Mammary epithelial cell (primary cell): ENCODE measurements at regions of chrX and their contacts with region 1.

Region 1: DNA sequence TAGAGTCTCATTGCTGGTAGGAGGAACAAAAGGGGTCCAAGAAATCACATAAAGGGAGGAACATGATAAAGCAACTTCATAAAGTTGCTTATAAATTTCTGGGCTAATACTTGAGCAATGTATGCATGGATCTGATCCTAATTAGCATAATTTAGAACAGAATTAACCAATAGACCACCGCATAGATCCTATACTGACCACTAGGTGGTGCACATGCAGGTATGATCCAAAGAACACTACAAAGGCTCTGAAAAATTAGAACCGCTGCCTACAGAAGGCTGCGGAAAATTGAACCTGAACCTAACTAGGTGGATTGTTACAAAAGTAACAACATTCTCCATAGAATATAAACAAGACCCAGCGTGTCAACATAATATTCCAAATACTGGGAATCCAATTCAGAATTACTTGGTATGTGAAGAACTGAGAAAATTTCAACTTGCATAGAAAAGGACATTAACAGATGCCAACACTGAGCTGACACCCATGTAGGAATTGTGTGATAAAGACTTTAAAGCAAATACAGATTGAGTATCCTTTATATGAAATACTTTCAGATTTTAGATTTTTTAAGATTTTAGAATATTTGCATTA is 23.3 kb downstream of the BRCC3 start:
- DNase-seq: peak; percentile 24
- H3K4me3 ChIP-seq: no peak overlapping the region
- H3K27ac ChIP-seq: no peak overlapping the region
- H3K4me1 ChIP-seq: no peaks in the 10 kb centered on the region
- H3K27me3 ChIP-seq: no peaks in the 10 kb centered on the region
- CTCF ChIP-seq: peak; percentile 56 to 61

Region 2: GRCh38 chrX:155148724-155149537 is 54.4 kb after region 1 on chrX:
- CTCF ChIA-PET with region 1: no interaction called
- dilution Hi-C with region 1: no loop called
- in situ Hi-C with region 1: no loop called
- intact Hi-C with region 1: loop called (anchors 2 kb)
- DNase-seq: peak; percentile 12
- H3K4me3 ChIP-seq: no peak overlapping the region
- H3K27ac ChIP-seq: no peak overlapping the region
- H3K4me1 ChIP-seq: no peaks in the 10 kb centered on the region
- H3K27me3 ChIP-seq: no peaks in the 10 kb centered on the region
- CTCF ChIP-seq: peak; percentile 30 to 60

Region 3: GRCh38 chrX:155179346-155179986 is 84.9 kb after region 1 on chrX:
- CTCF ChIA-PET with region 1: no interaction called
- dilution Hi-C with region 1: no loop called
- in situ Hi-C with region 1: loop called in 1 of 2 experiments (anchors 25 kb)
- intact Hi-C with region 1: loop called (anchors 1 kb)
- DNase-seq: peak; percentile 4
- H3K4me3 ChIP-seq: no peak overlapping the region
- H3K27ac ChIP-seq: no peak overlapping the region
- H3K4me1 ChIP-seq: no peaks in the 10 kb centered on the region
- H3K27me3 ChIP-seq: no peaks in the 10 kb centered on the region
- CTCF ChIP-seq: peak; percentile 23 to 47

Region 4: GRCh38 chrX:155216179-155216939 is 121.8 kb after region 1 on chrX and contains the start of gene VBP1:
- CTCF ChIA-PET with region 1: no interaction called
- dilution Hi-C with region 1: no loop called
- in situ Hi-C with region 1: no loop called
- intact Hi-C with region 1: loop called (anchors 5 kb)
- DNase-seq: peak; percentile 90
- H3K4me3 ChIP-seq: peak within 1 kb of the TSS; percentile 72 to 89 (median 84)
- H3K27ac ChIP-seq: peak within 1 kb of the TSS; percentile 67
- H3K4me1 ChIP-seq: peaks cover 3% of the 10 kb centered on the region
- H3K27me3 ChIP-seq: no peaks in the 10 kb centered on the region
- CTCF ChIP-seq: peak; percentile 14 to 42
- total RNA-seq, gene VBP1: 42.2 to 51.3 TPM

Region 5: GRCh38 chrX:155819966-155820491 is 725.5 kb after region 1 on chrX:
- CTCF ChIA-PET with region 1: no interaction called
- dilution Hi-C with region 1: no loop called
- in situ Hi-C with region 1: no loop called
- intact Hi-C with region 1: loop called (anchors 1 kb)
- DNase-seq: peak; percentile 88
- H3K4me3 ChIP-seq: no peak overlapping the region
- H3K27ac ChIP-seq: no peak overlapping the region
- H3K4me1 ChIP-seq: peaks cover 9% of the 10 kb centered on the region
- H3K27me3 ChIP-seq: no peaks in the 10 kb centered on the region
- CTCF ChIP-seq: peak; percentile 49 to 68